Vagina (tissue), 2 donors: ENCODE measurements at regions of chr1 and their contacts with region 1.

Region 1: DNA sequence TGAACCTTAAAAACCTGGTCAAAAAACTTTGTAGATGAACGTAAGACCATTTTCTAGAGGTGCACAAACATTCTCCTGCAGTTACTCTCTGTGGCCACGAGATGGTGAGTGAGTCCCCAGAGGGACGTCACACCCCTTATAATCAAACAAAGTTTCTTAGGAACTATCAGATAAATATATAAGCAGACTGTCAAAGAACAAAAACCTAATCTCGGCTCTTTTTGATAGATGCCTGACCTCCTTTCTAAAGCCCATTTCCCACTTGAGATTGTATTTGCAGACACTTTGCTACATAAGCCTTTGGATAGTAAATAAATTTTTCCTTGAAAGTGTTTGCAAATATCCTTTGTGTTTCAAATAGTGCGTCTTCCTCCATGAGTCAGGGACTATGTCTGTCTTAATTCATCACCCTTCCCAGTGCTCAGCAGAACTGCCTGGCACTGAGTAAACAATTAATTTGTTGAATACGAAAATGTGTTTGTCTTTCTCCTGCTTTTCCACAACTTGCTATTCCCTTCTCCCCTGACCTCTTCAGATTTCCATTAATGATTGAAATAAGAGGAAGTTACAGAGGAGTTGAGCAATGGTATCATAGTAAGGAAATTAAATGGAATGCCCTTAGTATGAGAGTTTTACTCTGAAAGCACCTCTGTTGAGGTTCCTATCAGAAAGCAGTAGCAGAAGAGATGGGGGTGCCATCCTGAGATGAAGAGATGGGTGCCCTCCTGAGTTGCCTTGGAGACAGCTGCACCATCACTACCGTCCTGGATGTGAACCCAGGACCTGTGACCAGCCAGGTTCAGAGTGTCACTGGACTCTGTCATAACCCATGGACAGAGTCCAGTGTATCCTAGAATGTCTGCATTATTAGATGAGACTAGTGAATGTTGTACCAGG is 57.8 kb upstream of the RAVER2 start:
- DNase-seq: no peak
- H3K4me3 ChIP-seq: no peak overlapping the region
- H3K27ac ChIP-seq: peak overlapping the region; percentile 7
- H3K4me1 ChIP-seq: peaks cover 6% of the 10 kb centered on the region
- H3K27me3 ChIP-seq: no peaks in the 10 kb centered on the region
- CTCF ChIP-seq: peak; percentile 53 to 71 (median 65)
- POLR2A ChIP-seq: no peak

Region 2: GRCh38 chr1:64440183-64440826 is 246.8 kb before region 1 on chr1:
- intact Hi-C with region 1: no loop called
- DNase-seq: no peak
- H3K4me3 ChIP-seq: no peak overlapping the region
- H3K27ac ChIP-seq: no peak overlapping the region
- H3K4me1 ChIP-seq: no peaks in the 10 kb centered on the region
- H3K27me3 ChIP-seq: no peaks in the 10 kb centered on the region
- CTCF ChIP-seq: no peak
- POLR2A ChIP-seq: no peak

Region 3: DNA sequence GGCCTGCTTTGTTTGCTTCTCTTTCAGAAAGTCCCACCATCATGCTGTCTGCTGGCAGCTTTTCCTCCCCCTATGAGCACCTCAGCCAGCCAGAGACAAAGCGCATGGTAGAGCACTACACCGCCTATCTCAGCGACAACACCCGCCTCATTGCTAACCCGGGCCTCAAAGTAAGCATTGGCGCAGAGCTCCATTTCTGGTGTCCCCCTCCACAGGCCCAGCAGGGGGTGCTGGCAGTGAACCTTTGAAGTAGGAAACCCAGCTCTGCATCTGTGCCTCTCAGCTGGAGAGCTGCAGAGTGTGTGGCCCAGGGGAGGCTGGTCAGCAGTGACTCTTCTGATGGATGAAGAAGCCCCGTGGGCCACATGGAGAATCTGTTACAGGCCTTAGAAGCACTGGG is 23.4 kb before region 1 on chr1:
- intact Hi-C with region 1: loop called (anchors 1 kb)
- DNase-seq: no peak
- H3K4me3 ChIP-seq: no peak overlapping the region
- H3K27ac ChIP-seq: no peak overlapping the region
- H3K4me1 ChIP-seq: no peaks in the 10 kb centered on the region
- H3K27me3 ChIP-seq: no peaks in the 10 kb centered on the region
- CTCF ChIP-seq: no peak
- POLR2A ChIP-seq: no peak

Region 4: GRCh38 chr1:64745986-64746940 is 59.2 kb after region 1 on chr1:
- intact Hi-C with region 1: loop called (anchors 2 kb)
- DNase-seq: no peak
- H3K4me3 ChIP-seq: peak overlapping the region; percentile 81 to 95
- H3K27ac ChIP-seq: peak overlapping the region; percentile 92
- H3K4me1 ChIP-seq: peaks cover 34% of the 10 kb centered on the region
- H3K27me3 ChIP-seq: no peaks in the 10 kb centered on the region
- CTCF ChIP-seq: no peak
- POLR2A ChIP-seq: no peak

Region 5: GRCh38 chr1:64823691-64824476 is 136.8 kb after region 1 on chr1:
- intact Hi-C with region 1: loop called (anchors 10 kb)
- DNase-seq: no peak
- H3K4me3 ChIP-seq: no peak overlapping the region
- H3K27ac ChIP-seq: no peak overlapping the region
- H3K4me1 ChIP-seq: no peaks in the 10 kb centered on the region
- H3K27me3 ChIP-seq: no peaks in the 10 kb centered on the region
- CTCF ChIP-seq: peak; percentile 60 to 84 (median 84)
- POLR2A ChIP-seq: no peak

Region 6: GRCh38 chr1:64917328-64917861 is 230.3 kb after region 1 on chr1:
- intact Hi-C with region 1: no loop called
- DNase-seq: no peak
- H3K4me3 ChIP-seq: no peak overlapping the region
- H3K27ac ChIP-seq: peak overlapping the region; percentile 39
- H3K4me1 ChIP-seq: peaks cover 67% of the 10 kb centered on the region
- H3K27me3 ChIP-seq: no peaks in the 10 kb centered on the region
- CTCF ChIP-seq: no peak
- POLR2A ChIP-seq: no peak